PC-9 (cell line): ENCODE measurements at regions of chr19 and their contacts with region 1.

Region 1: GRCh38 chr19:46878613-46879375 is 18.0 kb downstream of the ARHGAP35 start:
- DNase-seq: no peak
- H3K4me3 ChIP-seq: no peak overlapping the region
- H3K27ac ChIP-seq: 0 out of 2 replicates have a peak overlapping the region, but pooled peaks have one; percentile 24
- H3K4me1 ChIP-seq: peaks cover 40% of the 10 kb centered on the region
- H3K27me3 ChIP-seq: no peaks in the 10 kb centered on the region
- CTCF ChIP-seq: no peak

Region 2: GRCh38 chr19:46890423-46891170 is 11.8 kb after region 1 on chr19:
- CTCF ChIA-PET with region 1: interaction called, 5 read pairs
- POLR2A ChIA-PET with region 1: interaction called, 11 read pairs
- intact Hi-C with region 1: no loop called
- DNase-seq: peak in 1 of 2 experiments; percentile 97
- H3K4me3 ChIP-seq: 0 out of 2 replicates have a peak overlapping the region, but pooled peaks have one; percentile 4
- H3K27ac ChIP-seq: peak overlapping the region; percentile 80
- H3K4me1 ChIP-seq: peaks cover 71% of the 10 kb centered on the region
- H3K27me3 ChIP-seq: no peaks in the 10 kb centered on the region
- CTCF ChIP-seq: no peak

Region 3: DNA sequence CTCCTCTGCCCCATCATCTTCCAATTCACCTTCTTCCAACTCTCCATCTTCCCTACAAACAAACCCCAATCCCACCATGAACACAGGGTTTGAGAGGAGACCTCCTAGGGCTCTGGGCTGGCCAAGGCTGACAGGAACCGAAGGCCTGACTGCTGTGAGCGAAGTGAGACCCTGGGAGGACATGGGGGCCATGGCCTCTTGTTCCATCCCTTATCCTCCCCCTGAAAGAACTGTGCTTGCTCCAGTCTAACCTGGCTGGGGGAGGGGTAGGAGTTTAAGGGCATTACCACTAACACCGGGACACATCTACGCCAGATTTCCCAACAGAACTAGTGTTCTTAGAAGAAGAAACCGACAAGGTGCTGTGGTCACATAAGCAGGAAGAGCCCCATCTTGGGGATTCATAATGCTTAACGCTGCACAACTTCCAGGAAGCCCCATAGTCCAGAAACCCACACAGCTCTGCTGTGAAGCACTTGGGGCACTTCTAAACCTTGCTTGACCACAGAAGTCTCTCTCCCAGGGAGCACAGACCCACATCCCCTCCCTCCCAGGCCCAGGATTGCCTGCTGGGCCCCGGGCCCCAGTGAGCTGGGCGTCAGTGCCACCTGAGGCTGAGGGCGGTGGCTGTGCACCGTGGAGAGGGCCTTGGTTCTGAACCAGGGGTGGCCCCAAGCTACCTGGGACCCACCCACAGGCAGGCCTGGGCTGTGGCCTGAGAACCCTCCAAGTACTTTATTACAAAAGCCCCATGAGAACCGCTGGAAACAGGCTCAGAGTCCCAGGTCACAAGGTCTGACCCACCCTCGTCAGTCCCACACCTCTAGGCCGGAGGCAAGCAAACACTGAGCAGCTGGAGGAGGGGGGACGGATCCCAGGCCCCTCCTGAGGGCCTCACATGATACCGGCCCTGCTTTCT is 216.0 kb after region 1 on chr19:
- CTCF ChIA-PET with region 1: no interaction called
- POLR2A ChIA-PET with region 1: no interaction called
- intact Hi-C with region 1: no loop called
- DNase-seq: peak in 1 of 2 experiments; percentile 33
- H3K4me3 ChIP-seq: no peak overlapping the region
- H3K27ac ChIP-seq: peak overlapping the region; percentile 77
- H3K4me1 ChIP-seq: peaks cover 42% of the 10 kb centered on the region
- H3K27me3 ChIP-seq: no peaks in the 10 kb centered on the region
- CTCF ChIP-seq: no peak